HepG2 (cell line): ENCODE measurements at regions of chr9 and their contacts with region 1.

Region 1: GRCh38 chr9:108412755-108413154 is 443.0 kb downstream of the ACTL7B start:
- DNase-seq: no peak
- ATAC-seq: no peak
- H3K4me3 ChIP-seq: no peak overlapping the region
- H3K27ac ChIP-seq: no peak overlapping the region
- H3K4me1 ChIP-seq: peaks cover 5% of the 10 kb centered on the region; the same call in 1 of the 2 replicates
- H3K27me3 ChIP-seq: no peaks in the 10 kb centered on the region
- CTCF ChIP-seq: no peak
- EP300 ChIP-seq: no peak
- POLR2A ChIP-seq: no peak
- RAD21 ChIP-seq: no peak

Region 2: DNA sequence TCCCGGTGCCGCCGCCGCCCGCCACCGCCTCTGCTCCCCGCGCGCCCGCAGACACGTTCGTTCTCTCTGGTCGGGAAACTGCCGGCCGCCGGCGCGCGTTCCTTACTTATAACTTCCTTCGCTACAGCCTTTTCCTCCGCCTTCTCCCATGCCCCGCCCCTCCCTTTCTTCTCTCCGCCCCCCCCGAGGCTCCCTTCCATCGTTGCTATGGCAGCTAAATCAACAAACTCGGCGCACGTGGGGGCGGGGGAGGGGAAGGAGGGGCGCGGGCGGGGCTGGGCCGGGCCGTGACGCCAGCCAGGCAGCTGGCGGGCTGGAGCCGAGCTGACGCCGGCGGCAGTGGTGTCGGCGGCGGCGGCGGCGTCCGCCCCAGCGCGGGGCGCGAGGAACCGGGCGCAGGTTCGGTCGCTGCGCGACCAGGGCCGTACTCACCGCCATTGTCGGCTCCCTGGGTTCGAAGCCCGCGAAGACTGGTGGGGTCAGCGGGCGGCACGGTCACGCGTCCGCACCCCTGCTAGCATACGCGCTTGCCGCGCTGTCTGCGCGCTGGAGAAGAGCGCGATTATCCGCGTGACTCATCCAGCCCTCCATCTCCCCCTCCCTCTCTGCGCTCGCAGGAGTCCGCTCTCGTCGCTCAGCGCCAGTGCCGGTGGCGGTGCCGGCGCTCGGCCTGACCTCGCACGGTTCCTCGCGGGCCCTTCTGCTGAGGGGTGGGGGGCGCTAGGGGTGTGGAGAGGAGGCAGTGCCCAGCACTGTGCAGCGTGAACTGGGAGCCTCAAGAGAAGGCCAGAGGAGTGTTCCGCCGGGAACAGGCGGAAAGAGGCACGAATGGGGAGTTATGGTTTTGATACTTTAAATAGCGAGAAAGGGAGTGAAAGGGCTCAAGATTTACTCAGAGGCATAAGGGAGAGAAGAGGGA is 922.8 kb before region 1 on chr9 and contains the start of gene KLF4:
- CTCF ChIA-PET with region 1: no interaction called
- POLR2A ChIA-PET with region 1: no interaction called
- in situ Hi-C with region 1: no loop called
- intact Hi-C with region 1: loop called (anchors 10 kb)
- DNase-seq: peak; percentile 62
- ATAC-seq: peak; percentile 82
- H3K4me3 ChIP-seq: peak within 1 kb of the TSS; percentile 40 to 64 (median 49); a peak in 5 of 6 replicates
- H3K27ac ChIP-seq: no peak within 1 kb of the TSS
- H3K4me1 ChIP-seq: peaks cover 16% of the 10 kb centered on the region
- H3K27me3 ChIP-seq: peaks cover 0 to 49% of the 10 kb centered on the region in 2 experiments; a peak in 3 of 5 replicates
- CTCF ChIP-seq: no peak
- EP300 ChIP-seq: no peak
- POLR2A ChIP-seq: no peak
- RAD21 ChIP-seq: no peak
- total RNA-seq, gene KLF4: 0.20 TPM in 1 of 2 replicates, not detected in the other

Region 3: GRCh38 chr9:108535526-108535925 is 122.8 kb after region 1 on chr9:
- CTCF ChIA-PET with region 1: interaction called, 6 read pairs
- POLR2A ChIA-PET with region 1: no interaction called
- in situ Hi-C with region 1: no loop called
- intact Hi-C with region 1: loop called (anchors 1 kb)
- DNase-seq: peak; percentile 9
- ATAC-seq: peak; percentile 77
- H3K4me3 ChIP-seq: no peak overlapping the region
- H3K27ac ChIP-seq: no peak overlapping the region
- H3K4me1 ChIP-seq: no peaks in the 10 kb centered on the region
- H3K27me3 ChIP-seq: no peaks in the 10 kb centered on the region; a peak in 1 of 5 replicates
- CTCF ChIP-seq: peak; percentile 48
- EP300 ChIP-seq: no peak
- POLR2A ChIP-seq: no peak
- RAD21 ChIP-seq: no peak

Region 4: DNA sequence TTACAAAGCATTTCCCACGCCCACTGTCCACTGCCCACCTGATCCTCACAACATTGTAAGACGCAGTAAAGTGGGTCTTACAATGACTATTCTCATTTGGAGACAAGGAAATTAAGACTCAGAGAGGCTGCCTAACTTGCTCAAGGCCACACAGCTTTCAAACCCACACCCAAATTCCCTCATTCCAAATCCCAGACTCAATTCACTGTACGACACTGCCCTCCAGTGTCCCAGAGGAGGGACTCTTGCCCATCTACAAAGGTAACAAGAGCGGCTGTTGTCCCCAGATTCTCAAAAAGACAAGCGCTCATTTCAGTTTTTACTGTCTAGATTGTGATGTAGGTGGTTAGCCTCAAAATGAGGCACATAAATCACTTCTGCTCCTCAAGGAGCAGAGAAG is 258.4 kb after region 1 on chr9:
- CTCF ChIA-PET with region 1: no interaction called
- POLR2A ChIA-PET with region 1: no interaction called
- in situ Hi-C with region 1: no loop called
- intact Hi-C with region 1: loop called (anchors 10 kb)
- DNase-seq: peak; percentile 17
- ATAC-seq: peak; percentile 53; the same call in 2 of the 3 replicates
- H3K4me3 ChIP-seq: no peak overlapping the region
- H3K27ac ChIP-seq: no peak overlapping the region
- H3K4me1 ChIP-seq: no peaks in the 10 kb centered on the region
- H3K27me3 ChIP-seq: peaks cover 1 to 4% of the 10 kb centered on the region in 2 experiments; a peak in 3 of 5 replicates
- CTCF ChIP-seq: peak; percentile 61
- EP300 ChIP-seq: no peak
- POLR2A ChIP-seq: no peak
- RAD21 ChIP-seq: peak; percentile 26; the same call in 1 of the 2 replicates

Region 5: DNA sequence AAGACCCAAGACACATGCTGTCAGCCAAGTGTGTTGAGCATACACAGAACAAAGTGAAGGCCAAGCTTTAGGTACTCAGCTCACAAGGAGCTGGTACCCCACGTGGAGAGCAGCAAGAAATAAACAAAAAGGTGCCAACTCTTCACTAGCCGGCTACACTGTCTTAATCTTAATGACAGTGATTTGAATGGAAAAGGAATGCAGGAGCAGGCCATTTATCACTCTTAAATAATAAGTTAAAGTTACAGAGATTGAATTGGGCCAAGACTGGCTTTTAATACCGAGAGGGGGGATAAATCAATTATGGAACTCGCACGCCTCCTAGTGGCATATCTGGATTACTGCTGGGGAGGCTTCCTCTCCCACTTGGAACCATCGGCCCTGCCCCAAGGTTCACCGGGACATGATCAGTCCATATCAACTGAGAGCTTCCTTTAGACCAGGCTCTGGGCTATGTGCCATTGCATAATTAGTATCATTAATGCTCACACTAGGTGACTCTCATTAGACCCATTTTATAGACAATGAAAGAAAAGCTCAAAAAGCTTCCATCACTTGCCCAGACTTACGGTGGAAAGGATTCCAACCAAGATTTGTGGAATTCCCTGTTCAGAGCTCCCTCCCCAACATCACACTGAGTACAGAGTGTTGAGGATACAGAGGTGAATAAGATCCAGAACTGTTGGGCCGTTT is 349.0 kb after region 1 on chr9:
- CTCF ChIA-PET with region 1: no interaction called
- POLR2A ChIA-PET with region 1: no interaction called
- in situ Hi-C with region 1: no loop called
- intact Hi-C with region 1: loop called (anchors 10 kb)
- DNase-seq: peak; percentile 47
- ATAC-seq: peak; percentile 93
- H3K4me3 ChIP-seq: peak overlapping the region in 2 of 3 experiments; percentile 41; a peak in 3 of 6 replicates
- H3K27ac ChIP-seq: no peak overlapping the region
- H3K4me1 ChIP-seq: peaks cover 16% of the 10 kb centered on the region
- H3K27me3 ChIP-seq: no peaks in the 10 kb centered on the region
- CTCF ChIP-seq: peak; percentile 87
- EP300 ChIP-seq: no peak
- POLR2A ChIP-seq: no peak
- RAD21 ChIP-seq: peak; percentile 82